ENCODE measurements at regions of chr9 and their contacts with region 1.

Region 1: DNA sequence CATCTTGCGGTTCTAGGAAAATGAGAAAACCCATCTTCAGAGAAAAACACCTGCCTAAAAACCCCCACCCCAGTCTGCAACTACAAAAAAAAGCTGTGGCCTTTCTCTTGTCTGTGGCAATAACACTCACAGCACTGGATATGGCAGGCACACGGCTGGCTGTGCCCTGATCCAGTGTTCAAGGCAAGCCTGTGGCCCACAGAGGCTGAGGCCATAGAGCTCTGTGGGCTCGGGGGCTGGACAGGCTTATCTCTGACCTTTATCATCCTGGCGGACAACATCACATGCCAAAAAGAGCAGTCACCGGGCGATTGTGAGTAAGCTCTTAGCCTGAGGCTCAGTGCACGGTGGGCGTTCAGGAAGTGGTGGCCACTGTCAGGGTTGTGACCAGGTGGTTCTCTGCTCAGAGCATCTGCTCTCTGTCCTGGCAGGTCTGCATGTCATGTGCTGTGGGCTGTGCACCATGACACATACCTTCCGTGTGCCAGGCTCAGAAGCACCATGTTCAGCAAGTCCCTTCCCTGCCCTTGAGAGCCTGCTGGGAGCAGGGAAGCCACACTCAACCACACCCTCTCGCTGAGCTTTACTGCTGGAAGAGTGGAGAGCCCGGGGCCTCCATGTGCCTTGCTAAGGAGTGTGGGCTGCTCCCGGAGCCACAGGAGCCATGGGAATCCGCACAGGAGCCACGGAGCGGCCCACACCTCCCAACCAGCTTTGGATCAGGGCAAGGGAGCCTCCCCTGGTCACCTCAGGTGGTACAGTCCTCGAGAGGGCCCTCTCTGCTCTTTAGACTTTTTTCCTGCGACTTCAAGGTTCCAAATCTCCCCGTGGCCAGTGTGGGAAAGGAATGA is 34.6 kb upstream of the WDR38 start:
- DNase-seq: no peak
- H3K4me3 ChIP-seq: no peak overlapping the region
- H3K27ac ChIP-seq: no peak overlapping the region
- H3K4me1 ChIP-seq: peaks cover 0 to 5% (median 2%) of the 10 kb centered on the region in 4 experiments; a peak in 5 of 7 replicates
- H3K27me3 ChIP-seq: no peaks in the 10 kb centered on the region
- CTCF ChIP-seq: peak; percentile 25 to 29 (median 29); a peak in 3 of 4 replicates
- EP300 ChIP-seq: peak in 1 of 2 experiments; percentile 57; a peak in 1 of 3 replicates
- POLR2A ChIP-seq: no peak
- RAD21 ChIP-seq: peak; percentile 32 to 51; a peak in 3 of 4 replicates

Region 2: GRCh38 chr9:124794902-124795491 is 23.7 kb before region 1 on chr9:
- CTCF ChIA-PET with region 1: interaction called, 25 read pairs
- POLR2A ChIA-PET with region 1: interaction called, 3 read pairs
- DNase-seq: no peak
- H3K4me3 ChIP-seq: no peak overlapping the region
- H3K27ac ChIP-seq: no peak overlapping the region
- H3K4me1 ChIP-seq: peaks cover 0 to 12% (median 0%) of the 10 kb centered on the region in 4 experiments; a peak in 3 of 7 replicates
- H3K27me3 ChIP-seq: no peaks in the 10 kb centered on the region
- CTCF ChIP-seq: peak; percentile 13 to 27 (median 16); a peak in 3 of 4 replicates
- EP300 ChIP-seq: no peak
- POLR2A ChIP-seq: no peak
- RAD21 ChIP-seq: peak in 1 of 2 experiments; percentile 30; a peak in 1 of 4 replicates

Region 3: DNA sequence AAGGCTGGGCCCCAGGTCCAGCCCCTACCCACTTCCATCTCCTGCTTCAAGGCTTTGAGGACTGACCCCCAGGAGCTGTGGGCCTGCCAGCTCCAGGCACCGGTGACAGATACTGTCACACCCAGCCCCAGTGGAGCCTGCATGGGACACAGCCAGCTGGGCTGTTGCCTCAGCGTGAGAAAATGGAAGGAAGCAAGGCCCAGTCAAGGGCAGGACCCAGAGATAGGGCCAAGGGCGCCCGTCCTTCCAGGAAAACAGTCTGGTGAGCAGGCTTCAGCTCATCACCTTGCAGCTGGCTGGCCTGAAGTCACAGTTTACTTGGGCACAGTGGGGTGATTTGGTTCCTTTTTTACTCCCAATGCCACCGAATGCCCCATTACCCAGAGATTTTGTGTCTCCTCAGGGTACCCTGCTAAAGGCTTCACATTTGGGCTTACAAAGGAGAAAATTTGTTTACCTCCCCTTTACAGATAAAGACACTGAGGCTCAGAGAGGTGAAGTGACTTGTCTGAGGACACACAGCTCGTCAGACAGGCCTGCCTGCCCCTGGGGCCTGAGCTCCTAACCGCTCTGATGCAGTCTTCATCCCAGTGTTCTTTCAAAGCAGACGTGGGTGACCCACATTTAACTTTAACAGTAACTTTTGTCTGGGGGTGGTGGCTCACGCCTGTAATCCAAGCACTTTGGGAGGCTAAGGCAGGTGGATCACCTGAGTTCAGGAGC is 13.1 kb after region 1 on chr9:
- CTCF ChIA-PET with region 1: interaction called, 1,529 read pairs
- POLR2A ChIA-PET with region 1: interaction called, 3 read pairs
- DNase-seq: no peak
- H3K4me3 ChIP-seq: no peak overlapping the region
- H3K27ac ChIP-seq: no peak overlapping the region
- H3K4me1 ChIP-seq: peaks cover 0 to 3% (median 1%) of the 10 kb centered on the region in 4 experiments; a peak in 3 of 7 replicates
- H3K27me3 ChIP-seq: no peaks in the 10 kb centered on the region
- CTCF ChIP-seq: no peak
- EP300 ChIP-seq: no peak
- POLR2A ChIP-seq: no peak
- RAD21 ChIP-seq: no peak